ENCODE measurements at regions of chr3 and their contacts with region 1.

Region 1: GRCh38 chr3:193701904-193702635 is 109.1 kb downstream of the OPA1 start:
- DNase-seq: no peak
- ATAC-seq: peak; percentile 24; the same call in 1 of the 3 replicates
- H3K4me3 ChIP-seq: no peak overlapping the region
- H3K27ac ChIP-seq: no peak overlapping the region
- H3K4me1 ChIP-seq: no peaks in the 10 kb centered on the region
- H3K27me3 ChIP-seq: no peaks in the 10 kb centered on the region
- CTCF ChIP-seq: no peak
- EP300 ChIP-seq: no peak
- POLR2A ChIP-seq: 0 out of 2 replicates have a peak, but pooled peaks have one; percentile 14
- RAD21 ChIP-seq: no peak

Region 2: DNA sequence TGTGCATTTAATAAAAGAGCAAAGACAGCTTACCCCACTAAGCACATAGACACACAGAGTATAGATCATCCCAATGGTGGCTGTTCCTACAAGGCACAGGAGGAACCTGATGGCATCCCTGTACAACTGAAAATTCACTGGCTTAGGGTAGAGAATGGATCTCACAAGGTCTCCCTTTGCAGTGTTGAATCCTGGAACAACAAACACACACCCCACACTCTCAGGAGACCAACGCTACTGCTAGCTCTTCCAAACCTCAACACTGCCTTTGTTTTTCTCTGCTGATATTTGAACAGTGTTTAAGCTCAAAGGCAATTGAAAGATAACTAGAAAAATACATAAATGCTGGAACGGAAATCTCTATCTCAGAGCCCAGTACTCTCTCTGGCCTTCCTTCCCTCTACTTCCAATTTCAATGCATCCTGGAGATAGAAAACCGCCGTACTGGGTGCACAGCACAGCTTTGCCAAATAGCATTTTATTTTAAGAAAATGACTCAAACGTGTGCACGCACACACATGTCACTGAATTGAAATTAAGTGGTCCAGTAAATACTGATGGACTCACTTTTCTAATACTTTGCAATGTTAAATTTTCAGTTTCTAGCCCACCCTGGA is 236.0 kb before region 1 on chr3:
- CTCF ChIA-PET with region 1: no interaction called
- POLR2A ChIA-PET with region 1: no interaction called
- in situ Hi-C with region 1: no loop called
- intact Hi-C with region 1: loop called (anchors 10 kb)
- DNase-seq: no peak
- ATAC-seq: no peak
- H3K4me3 ChIP-seq: no peak overlapping the region
- H3K27ac ChIP-seq: no peak overlapping the region
- H3K4me1 ChIP-seq: no peaks in the 10 kb centered on the region
- H3K27me3 ChIP-seq: no peaks in the 10 kb centered on the region; a peak in 2 of 5 replicates
- CTCF ChIP-seq: no peak
- EP300 ChIP-seq: no peak
- POLR2A ChIP-seq: no peak
- RAD21 ChIP-seq: no peak

Region 3: GRCh38 chr3:193592944-193593667 is 109.0 kb before region 1 on chr3 and contains the start of gene OPA1:
- CTCF ChIA-PET with region 1: no interaction called
- POLR2A ChIA-PET with region 1: no interaction called
- in situ Hi-C with region 1: no loop called
- intact Hi-C with region 1: loop called (anchors 5 kb)
- DNase-seq: peak; percentile 95 to 99 (median 96)
- ATAC-seq: peak; percentile 96
- H3K4me3 ChIP-seq: peak within 1 kb of the TSS; percentile 80
- H3K27ac ChIP-seq: peak within 1 kb of the TSS; percentile 84
- H3K4me1 ChIP-seq: peaks cover 5 to 22% of the 10 kb centered on the region in 2 experiments; a peak in 4 of 5 replicates
- H3K27me3 ChIP-seq: no peaks in the 10 kb centered on the region
- CTCF ChIP-seq: peak; percentile 0 to 39 (median 39); a peak in 3 of 6 replicates
- EP300 ChIP-seq: peak; percentile 58
- POLR2A ChIP-seq: peak; percentile 90
- RAD21 ChIP-seq: no peak
- polyA plus RNA-seq, gene OPA1: 19.7 to 30.8 TPM

Region 4: GRCh38 chr3:194431553-194431952 is 729.5 kb after region 1 on chr3:
- CTCF ChIA-PET with region 1: no interaction called
- POLR2A ChIA-PET with region 1: no interaction called
- in situ Hi-C with region 1: no loop called
- intact Hi-C with region 1: no loop called
- DNase-seq: no peak
- ATAC-seq: no peak
- H3K4me3 ChIP-seq: no peak overlapping the region
- H3K27ac ChIP-seq: no peak overlapping the region
- H3K4me1 ChIP-seq: no peaks in the 10 kb centered on the region
- H3K27me3 ChIP-seq: no peaks in the 10 kb centered on the region
- CTCF ChIP-seq: no peak
- EP300 ChIP-seq: no peak
- POLR2A ChIP-seq: no peak
- RAD21 ChIP-seq: no peak